B cell (primary cell): ENCODE measurements at regions of chr19 and their contacts with region 1.

Region 1: DNA sequence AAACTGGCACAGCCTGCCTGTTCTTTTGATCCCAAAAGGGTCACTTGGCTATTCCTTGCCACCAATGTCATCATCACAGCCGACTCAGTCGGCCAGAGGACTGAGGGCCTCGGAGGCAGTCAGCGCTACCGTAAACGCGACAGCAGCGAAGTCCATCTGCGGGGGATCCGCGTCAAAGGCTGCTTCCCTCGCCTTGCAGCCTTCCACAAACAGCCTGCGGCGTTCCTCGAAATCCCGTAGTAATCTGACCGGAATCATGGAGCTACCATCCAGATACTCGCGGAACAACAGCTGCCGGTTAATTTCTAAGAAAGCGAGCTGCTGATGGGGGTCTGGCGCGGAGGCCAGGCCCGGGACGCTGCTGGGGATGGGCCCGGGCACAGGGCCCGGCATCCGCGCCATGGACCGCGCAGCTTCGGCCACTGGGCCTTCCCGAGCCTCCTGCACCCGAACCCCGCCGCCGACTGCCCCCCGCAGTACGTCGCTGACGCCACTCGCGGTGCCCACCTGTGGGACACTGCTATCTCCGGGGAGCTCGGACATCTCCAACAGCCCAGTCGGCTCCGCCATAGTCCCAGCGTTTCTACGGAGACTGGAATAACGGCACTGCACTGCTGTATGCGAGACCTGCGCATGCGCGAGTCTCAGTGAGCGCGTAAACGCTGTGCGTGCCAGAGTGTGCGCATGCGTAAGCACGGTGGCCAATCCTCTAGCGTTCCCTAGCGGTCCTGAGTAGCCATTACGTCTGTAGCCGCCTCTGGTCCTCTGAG is at the start of gene EID2B:
- DNase-seq: peak; percentile 97
- ATAC-seq: peak; percentile 99
- H3K4me3 ChIP-seq: peak within 1 kb of the TSS; percentile 75 to 98 (median 78)
- H3K4me3 Mint-ChIP-seq: peak within 1 kb of the TSS; percentile 96
- H3K27ac ChIP-seq: peak within 1 kb of the TSS; percentile 37 to 83
- H3K27ac Mint-ChIP-seq: peak within 1 kb of the TSS; percentile 92
- H3K4me1 ChIP-seq: peaks cover 13 to 14% of the 10 kb centered on the region in 2 donors
- H3K4me1 Mint-ChIP-seq: peaks cover 25% of the 10 kb centered on the region
- H3K27me3 ChIP-seq: no peaks in the 10 kb centered on the region
- H3K27me3 Mint-ChIP-seq: no peaks in the 10 kb centered on the region
- CTCF ChIP-seq: peak; percentile 98
- total RNA-seq, gene EID2B: 6.0 and 7.6 TPM in 2 replicates

Region 2: DNA sequence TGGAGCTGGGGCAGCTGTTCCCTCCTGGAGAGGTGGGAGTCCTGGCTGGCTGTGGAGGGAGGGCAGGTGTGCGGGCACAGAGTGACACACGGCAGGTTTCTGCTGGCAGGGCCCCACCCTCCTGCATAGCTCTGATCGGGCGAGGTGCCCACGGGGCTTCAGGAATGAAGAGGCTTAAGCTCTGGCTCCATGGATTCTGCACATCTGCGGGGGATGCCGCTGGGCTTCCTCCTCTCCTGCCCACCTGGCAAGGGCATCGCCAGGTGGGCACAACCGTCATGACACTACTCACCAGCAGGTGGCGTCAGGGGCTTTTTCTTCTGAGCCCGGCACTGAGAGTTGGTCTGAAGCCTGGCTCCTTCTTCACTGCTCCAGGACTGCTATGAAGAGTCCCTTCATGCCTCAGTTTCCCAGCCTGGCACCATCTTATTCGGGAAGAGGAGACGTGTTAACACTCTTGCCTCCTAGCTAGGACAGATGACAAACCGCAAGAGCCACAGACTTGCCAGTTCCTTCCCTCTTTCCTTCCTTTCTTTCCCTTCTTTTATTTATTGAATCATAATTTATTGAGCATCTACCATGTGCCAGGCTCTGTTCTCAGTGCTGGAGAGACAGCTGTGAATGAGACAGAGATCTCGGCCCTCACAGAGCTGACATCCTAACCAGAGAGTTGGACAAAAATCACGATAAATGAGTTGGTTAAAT is 422.0 kb before region 1 on chr19:
- CTCF ChIA-PET with region 1: interaction called, 23 read pairs
- POLR2A ChIA-PET with region 1: no interaction called
- intact Hi-C with region 1: loop called (anchors 1 kb)
- DNase-seq: peak; percentile 77
- ATAC-seq: peak; percentile 85
- H3K4me3 ChIP-seq: no peak overlapping the region
- H3K4me3 Mint-ChIP-seq: no peak overlapping the region
- H3K27ac ChIP-seq: no peak overlapping the region
- H3K27ac Mint-ChIP-seq: no peak overlapping the region
- H3K4me1 ChIP-seq: no peaks in the 10 kb centered on the region
- H3K4me1 Mint-ChIP-seq: no peaks in the 10 kb centered on the region
- H3K27me3 ChIP-seq: peaks cover 0 to 8% (median 3%) of the 10 kb centered on the region in 4 experiments
- H3K27me3 Mint-ChIP-seq: peaks cover 28% of the 10 kb centered on the region
- CTCF ChIP-seq: peak; percentile 89

Region 3: DNA sequence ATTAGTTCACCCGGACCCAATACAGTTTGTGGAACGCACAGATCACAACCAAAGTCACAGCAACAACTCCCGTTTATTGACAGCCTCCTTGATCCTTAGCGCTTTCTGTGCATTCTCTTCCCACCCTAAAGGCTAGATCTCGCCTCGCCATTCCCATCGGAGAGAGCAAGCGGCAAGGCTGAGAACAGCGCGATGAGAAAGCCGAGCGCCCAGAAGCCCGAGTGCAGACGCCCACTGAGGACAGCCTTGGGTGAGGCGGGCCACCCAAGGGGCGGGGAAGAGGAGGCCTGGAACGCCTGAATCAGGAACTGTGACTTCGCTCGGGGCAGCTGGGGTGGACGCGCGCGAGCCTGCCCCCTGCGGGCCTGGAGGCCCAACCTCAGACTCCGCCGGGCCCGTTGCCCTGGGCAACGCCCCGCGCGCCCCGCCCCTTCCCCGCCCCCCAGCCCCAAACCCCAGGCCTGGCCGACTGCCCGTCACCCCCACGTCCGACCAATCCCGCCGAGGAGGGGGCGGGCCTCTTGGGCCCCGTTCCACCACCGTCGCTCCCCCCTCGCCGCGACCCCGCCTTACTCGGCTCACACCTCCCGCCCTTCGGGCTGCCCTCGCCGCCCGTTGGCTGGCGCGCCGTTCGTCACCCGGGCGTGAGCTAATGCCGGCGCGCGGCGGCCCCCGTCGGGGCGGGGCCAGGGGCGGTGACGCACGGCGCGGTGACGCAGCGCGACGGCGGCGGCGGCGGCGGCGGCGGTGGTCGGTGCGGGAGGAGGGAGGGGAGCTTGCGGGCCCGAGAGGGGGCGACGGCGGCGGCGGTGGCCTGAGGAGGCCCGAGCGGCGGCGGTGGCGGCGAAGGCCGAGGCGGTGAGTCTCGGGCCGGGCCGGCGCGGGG is 190.5 kb before region 1 on chr19 and contains the start of gene SAMD4B:
- CTCF ChIA-PET with region 1: no interaction called
- POLR2A ChIA-PET with region 1: no interaction called
- intact Hi-C with region 1: loop called (anchors 5 kb)
- DNase-seq: peak; percentile 99
- ATAC-seq: peak; percentile 92
- H3K4me3 ChIP-seq: peak within 1 kb of the TSS; percentile 88 to 98 (median 98)
- H3K4me3 Mint-ChIP-seq: peak within 1 kb of the TSS; percentile 97
- H3K27ac ChIP-seq: peak within 1 kb of the TSS; percentile 79 to 86
- H3K27ac Mint-ChIP-seq: peak within 1 kb of the TSS; percentile 95
- H3K4me1 ChIP-seq: peaks cover 32 to 46% of the 10 kb centered on the region in 2 donors
- H3K4me1 Mint-ChIP-seq: peaks cover 65% of the 10 kb centered on the region
- H3K27me3 ChIP-seq: no peaks in the 10 kb centered on the region
- H3K27me3 Mint-ChIP-seq: no peaks in the 10 kb centered on the region
- CTCF ChIP-seq: peak; percentile 81
- total RNA-seq, gene SAMD4B: 90.0 and 96.1 TPM in 2 replicates

Region 4: DNA sequence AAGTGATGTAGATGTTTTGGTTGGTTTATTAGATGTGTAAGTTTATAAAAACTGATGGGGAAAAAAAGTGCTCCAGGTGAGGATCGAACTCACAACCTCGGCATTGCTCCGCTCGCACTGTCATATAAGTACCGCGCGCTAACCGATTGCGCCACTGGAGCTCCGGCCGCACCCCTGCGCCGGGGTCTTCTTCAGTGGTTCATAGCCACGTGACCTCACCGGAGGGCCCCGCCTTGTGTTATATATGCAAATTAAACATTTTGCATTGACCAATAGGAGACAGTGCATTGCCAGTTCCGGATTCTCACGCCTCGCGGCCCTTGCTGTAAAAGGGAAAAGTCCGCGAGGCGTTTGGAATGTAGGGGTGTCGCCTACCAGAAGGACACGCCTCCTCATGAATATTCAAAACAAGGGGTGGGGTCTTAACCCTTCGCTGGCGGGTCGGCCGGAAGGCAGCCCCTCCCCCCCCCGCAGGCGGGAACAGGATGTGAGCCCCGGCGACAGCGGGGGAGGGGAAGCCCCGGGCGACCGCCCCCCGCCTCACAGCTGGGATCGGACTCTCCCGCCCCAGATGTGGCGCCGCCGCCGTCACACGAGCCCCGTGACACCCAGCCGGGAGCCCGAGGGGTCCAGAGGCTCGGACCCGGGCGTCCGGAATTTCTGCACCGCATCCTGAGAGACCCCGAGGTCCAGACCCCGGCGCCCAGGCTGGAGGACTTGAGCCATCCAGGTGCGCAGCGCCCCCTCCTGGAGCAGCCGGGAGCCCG is 120.1 kb before region 1 on chr19 and contains the start of gene PLEKHG2:
- CTCF ChIA-PET with region 1: interaction called, 12 read pairs
- POLR2A ChIA-PET with region 1: no interaction called
- intact Hi-C with region 1: loop called (anchors 1 kb)
- DNase-seq: peak; percentile 99
- ATAC-seq: peak; percentile 53
- H3K4me3 ChIP-seq: peak within 1 kb of the TSS; percentile 74 to 98 (median 92)
- H3K4me3 Mint-ChIP-seq: peak within 1 kb of the TSS; percentile 94
- H3K27ac ChIP-seq: peak within 1 kb of the TSS; percentile 100
- H3K27ac Mint-ChIP-seq: peak within 1 kb of the TSS; percentile 99
- H3K4me1 ChIP-seq: peaks cover 24 to 40% of the 10 kb centered on the region in 2 donors
- H3K4me1 Mint-ChIP-seq: peaks cover 49% of the 10 kb centered on the region
- H3K27me3 ChIP-seq: no peaks in the 10 kb centered on the region
- H3K27me3 Mint-ChIP-seq: no peaks in the 10 kb centered on the region
- CTCF ChIP-seq: no peak
- total RNA-seq, gene PLEKHG2: 154 and 167 TPM in 2 replicates

Region 5: DNA sequence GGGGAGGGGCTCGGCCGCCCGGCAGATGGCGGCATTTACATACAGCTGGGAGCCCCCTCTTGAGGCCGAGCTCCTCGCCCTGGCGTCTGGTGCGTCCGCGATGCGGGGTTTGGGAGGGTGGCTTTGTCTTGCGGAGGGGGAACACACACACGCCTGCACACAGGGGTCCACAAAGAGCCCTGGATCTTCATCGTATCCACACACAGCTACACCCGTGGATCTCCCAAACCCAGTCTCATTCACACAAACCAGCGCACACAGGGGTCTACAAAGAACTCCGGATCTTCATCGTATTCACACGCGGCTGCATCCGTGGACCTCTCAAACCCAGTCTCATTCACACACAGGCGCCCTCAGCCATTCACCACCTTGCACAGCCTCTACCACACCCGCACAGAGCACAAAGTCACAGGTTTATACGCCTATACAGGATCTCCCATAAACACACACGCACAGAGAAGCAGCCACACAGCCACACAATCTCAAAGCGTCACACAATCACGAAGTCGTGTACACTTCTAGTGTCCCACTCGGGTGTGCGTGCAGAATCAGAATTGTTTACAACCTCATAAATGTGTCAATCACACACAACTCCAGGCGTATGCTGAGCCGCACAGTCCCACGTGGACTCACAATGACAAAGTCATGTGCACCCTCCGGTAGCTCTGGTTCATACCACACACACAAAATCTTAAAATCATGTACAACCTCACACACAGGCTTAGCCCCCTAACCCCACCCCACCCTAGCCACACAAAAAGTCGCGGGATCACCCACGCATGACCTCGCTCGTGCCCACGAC is 34.2 kb before region 1 on chr19:
- CTCF ChIA-PET with region 1: interaction called, 9 read pairs
- POLR2A ChIA-PET with region 1: no interaction called
- intact Hi-C with region 1: loop called (anchors 2 kb)
- DNase-seq: peak; percentile 65
- ATAC-seq: peak; percentile 37
- H3K4me3 ChIP-seq: peak overlapping the region; percentile 11 to 65 (median 48)
- H3K4me3 Mint-ChIP-seq: peak overlapping the region; percentile 85
- H3K27ac ChIP-seq: no peak overlapping the region
- H3K27ac Mint-ChIP-seq: peak overlapping the region; percentile 33
- H3K4me1 ChIP-seq: peaks cover 27 to 30% of the 10 kb centered on the region in 2 donors
- H3K4me1 Mint-ChIP-seq: peaks cover 22% of the 10 kb centered on the region
- H3K27me3 ChIP-seq: peaks cover 0 to 46% (median 22%) of the 10 kb centered on the region in 4 experiments
- H3K27me3 Mint-ChIP-seq: peaks cover 26% of the 10 kb centered on the region
- CTCF ChIP-seq: peak; percentile 17